ENCODE measurements at regions of chr20 and their contacts with region 1.

Region 1: DNA sequence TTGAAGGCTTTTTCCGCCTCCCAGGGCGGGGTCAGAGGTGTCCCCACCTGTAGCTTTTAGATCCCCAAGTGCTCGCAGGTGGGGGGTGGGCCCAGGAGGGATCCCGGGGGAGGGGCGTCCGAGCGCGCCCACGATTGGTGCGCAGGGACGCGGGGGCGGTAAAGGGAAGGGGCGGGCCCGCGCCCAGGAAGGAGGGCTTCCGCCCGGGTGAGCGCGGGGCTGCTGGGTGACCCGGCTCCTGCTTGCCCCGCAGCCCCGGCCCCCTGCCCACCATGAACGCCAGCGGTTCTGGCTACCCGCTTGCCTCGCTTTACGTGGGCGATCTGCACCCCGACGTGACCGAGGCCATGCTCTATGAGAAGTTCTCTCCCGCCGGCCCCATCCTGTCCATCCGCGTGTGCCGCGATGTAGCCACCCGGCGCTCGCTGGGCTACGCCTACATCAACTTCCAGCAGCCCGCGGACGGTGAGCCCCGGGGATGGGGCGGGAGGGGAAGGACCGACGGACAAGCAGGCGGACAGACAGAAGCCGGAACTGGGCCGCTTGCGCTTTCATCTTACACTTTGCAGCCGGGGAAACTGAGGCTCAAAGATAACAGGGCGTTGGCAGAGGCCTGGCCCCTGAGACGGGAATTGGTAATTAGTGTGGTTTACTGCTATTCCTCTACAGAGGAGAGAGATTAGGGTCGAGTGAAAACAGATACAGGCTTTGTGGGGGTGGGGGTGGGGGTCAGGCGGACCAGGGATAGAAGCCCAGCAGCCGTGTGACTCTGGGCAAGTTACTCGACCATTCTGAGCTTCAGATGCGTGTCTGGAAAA is at the start of gene PABPC1L:
- DNase-seq: peak; percentile 46 to 89 (median 79)
- ATAC-seq: peak; percentile 99
- H3K4me3 ChIP-seq: peak within 1 kb of the TSS; percentile 66 to 78
- H3K4me3 Mint-ChIP-seq: peak within 1 kb of the TSS; percentile 81
- H3K27ac ChIP-seq: peak within 1 kb of the TSS; percentile 19 to 35
- H3K27ac Mint-ChIP-seq: peak within 1 kb of the TSS; percentile 66
- H3K4me1 ChIP-seq: peaks cover 21% of the 10 kb centered on the region
- H3K4me1 Mint-ChIP-seq: peaks cover 30% of the 10 kb centered on the region
- H3K27me3 ChIP-seq: no peaks in the 10 kb centered on the region
- H3K27me3 Mint-ChIP-seq: no peaks in the 10 kb centered on the region
- CTCF ChIP-seq: no peak
- total RNA-seq, gene PABPC1L: 31.9 to 34.0 TPM

Region 2: DNA sequence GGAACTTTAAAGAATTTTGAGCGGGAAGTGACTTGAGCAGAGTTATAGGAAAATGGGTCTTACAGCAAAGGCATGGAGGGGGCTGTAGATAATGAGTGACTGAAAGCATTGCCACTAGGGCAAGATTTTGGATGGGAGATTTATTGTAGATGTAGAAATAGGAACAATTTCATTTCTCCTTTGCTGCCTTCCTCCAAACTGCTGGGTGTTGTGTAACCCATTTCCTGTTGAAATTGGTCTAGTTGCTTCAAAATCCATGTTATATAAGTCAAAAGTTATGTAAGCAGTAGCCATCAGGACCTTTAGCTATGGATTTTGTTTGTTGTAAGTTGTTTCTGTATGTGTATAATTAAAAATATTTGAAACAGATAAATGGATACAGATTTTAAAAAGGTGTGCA is 13.5 kb before region 1 on chr20:
- CTCF ChIA-PET with region 1: interaction called, 4 read pairs
- POLR2A ChIA-PET with region 1: interaction called, 7 read pairs
- intact Hi-C with region 1: loop called in 1 of 2 experiments (anchors 2 kb)
- DNase-seq: peak in 1 of 9 experiments; percentile 35
- ATAC-seq: no peak
- H3K4me3 ChIP-seq: no peak overlapping the region
- H3K4me3 Mint-ChIP-seq: peak overlapping the region; percentile 23
- H3K27ac ChIP-seq: peak overlapping the region in 1 of 2 experiments; percentile 52
- H3K27ac Mint-ChIP-seq: peak overlapping the region; percentile 79
- H3K4me1 ChIP-seq: peaks cover 80% of the 10 kb centered on the region
- H3K4me1 Mint-ChIP-seq: peaks cover 84% of the 10 kb centered on the region
- H3K27me3 ChIP-seq: no peaks in the 10 kb centered on the region
- H3K27me3 Mint-ChIP-seq: no peaks in the 10 kb centered on the region
- CTCF ChIP-seq: no peak

Region 3: GRCh38 chr20:44960103-44960852 is 50.2 kb after region 1 on chr20 and contains the start of gene TOMM34:
- CTCF ChIA-PET with region 1: interaction called, 3 read pairs
- POLR2A ChIA-PET with region 1: no interaction called
- intact Hi-C with region 1: loop called (anchors 5 kb)
- DNase-seq: peak; percentile 84 to 97 (median 95)
- ATAC-seq: peak; percentile 94
- H3K4me3 ChIP-seq: peak within 1 kb of the TSS; percentile 70 to 80
- H3K4me3 Mint-ChIP-seq: peak within 1 kb of the TSS; percentile 96
- H3K27ac ChIP-seq: peak within 1 kb of the TSS; percentile 58 to 60
- H3K27ac Mint-ChIP-seq: peak within 1 kb of the TSS; percentile 96
- H3K4me1 ChIP-seq: peaks cover 32% of the 10 kb centered on the region
- H3K4me1 Mint-ChIP-seq: peaks cover 56% of the 10 kb centered on the region
- H3K27me3 ChIP-seq: no peaks in the 10 kb centered on the region
- H3K27me3 Mint-ChIP-seq: no peaks in the 10 kb centered on the region
- CTCF ChIP-seq: no peak
- total RNA-seq, gene TOMM34: 11.9 to 12.4 TPM

Region 4: GRCh38 chr20:44966030-44966961 is 56.2 kb after region 1 on chr20 and contains the start of gene STK4:
- CTCF ChIA-PET with region 1: interaction called, 3 read pairs
- POLR2A ChIA-PET with region 1: no interaction called
- intact Hi-C with region 1: loop called in 1 of 2 experiments (anchors 5 kb)
- DNase-seq: peak; percentile 90 to 99 (median 96)
- ATAC-seq: peak; percentile 76
- H3K4me3 ChIP-seq: peak within 1 kb of the TSS; percentile 96 to 97
- H3K4me3 Mint-ChIP-seq: peak within 1 kb of the TSS; percentile 91
- H3K27ac ChIP-seq: peak within 1 kb of the TSS; percentile 82 to 93
- H3K27ac Mint-ChIP-seq: peak within 1 kb of the TSS; percentile 89
- H3K4me1 ChIP-seq: peaks cover 28% of the 10 kb centered on the region
- H3K4me1 Mint-ChIP-seq: peaks cover 51% of the 10 kb centered on the region
- H3K27me3 ChIP-seq: no peaks in the 10 kb centered on the region
- H3K27me3 Mint-ChIP-seq: no peaks in the 10 kb centered on the region
- CTCF ChIP-seq: no peak
- total RNA-seq, gene STK4: 253 to 259 TPM

Region 5: GRCh38 chr20:45293041-45294002 is 383.2 kb after region 1 on chr20:
- CTCF ChIA-PET with region 1: no interaction called
- POLR2A ChIA-PET with region 1: no interaction called
- intact Hi-C with region 1: loop called in 1 of 2 experiments (anchors 2 kb)
- DNase-seq: peak; percentile 66 to 84 (median 80)
- ATAC-seq: peak; percentile 91
- H3K4me3 ChIP-seq: peak overlapping the region; percentile 39 to 76
- H3K4me3 Mint-ChIP-seq: peak overlapping the region; percentile 80
- H3K27ac ChIP-seq: no peak overlapping the region
- H3K27ac Mint-ChIP-seq: no peak overlapping the region
- H3K4me1 ChIP-seq: no peaks in the 10 kb centered on the region
- H3K4me1 Mint-ChIP-seq: peaks cover 13% of the 10 kb centered on the region
- H3K27me3 ChIP-seq: peaks cover 7 to 8% of the 10 kb centered on the region in 2 experiments
- H3K27me3 Mint-ChIP-seq: peaks cover 45% of the 10 kb centered on the region
- CTCF ChIP-seq: peak; percentile 90

Measured in CD8-positive, alpha-beta T cell (primary cell).